CD4-positive, alpha-beta memory T cell (primary cell): ENCODE measurements at regions of chr10 and their contacts with region 1.

Region 1: GRCh38 chr10:114821293-114821914 is at the start of gene FHIP2A:
- DNase-seq: peak; percentile 71 to 91 (median 86)
- H3K4me3 ChIP-seq: peak within 1 kb of the TSS; percentile 59 to 66
- H3K4me3 Mint-ChIP-seq: peak within 1 kb of the TSS; percentile 91 to 96 (median 94)
- H3K27ac ChIP-seq: peak within 1 kb of the TSS; percentile 73
- H3K27ac Mint-ChIP-seq: peak within 1 kb of the TSS; percentile 92 to 96 (median 95)
- H3K4me1 ChIP-seq: peaks cover 42% of the 10 kb centered on the region
- H3K4me1 Mint-ChIP-seq: peaks cover 26 to 39% (median 33%) of the 10 kb centered on the region in 4 donors
- H3K27me3 ChIP-seq: no peaks in the 10 kb centered on the region
- H3K27me3 Mint-ChIP-seq: no peaks in the 10 kb centered on the region
- total RNA-seq, gene FHIP2A: 25.1 to 32.1 TPM

Region 2: DNA sequence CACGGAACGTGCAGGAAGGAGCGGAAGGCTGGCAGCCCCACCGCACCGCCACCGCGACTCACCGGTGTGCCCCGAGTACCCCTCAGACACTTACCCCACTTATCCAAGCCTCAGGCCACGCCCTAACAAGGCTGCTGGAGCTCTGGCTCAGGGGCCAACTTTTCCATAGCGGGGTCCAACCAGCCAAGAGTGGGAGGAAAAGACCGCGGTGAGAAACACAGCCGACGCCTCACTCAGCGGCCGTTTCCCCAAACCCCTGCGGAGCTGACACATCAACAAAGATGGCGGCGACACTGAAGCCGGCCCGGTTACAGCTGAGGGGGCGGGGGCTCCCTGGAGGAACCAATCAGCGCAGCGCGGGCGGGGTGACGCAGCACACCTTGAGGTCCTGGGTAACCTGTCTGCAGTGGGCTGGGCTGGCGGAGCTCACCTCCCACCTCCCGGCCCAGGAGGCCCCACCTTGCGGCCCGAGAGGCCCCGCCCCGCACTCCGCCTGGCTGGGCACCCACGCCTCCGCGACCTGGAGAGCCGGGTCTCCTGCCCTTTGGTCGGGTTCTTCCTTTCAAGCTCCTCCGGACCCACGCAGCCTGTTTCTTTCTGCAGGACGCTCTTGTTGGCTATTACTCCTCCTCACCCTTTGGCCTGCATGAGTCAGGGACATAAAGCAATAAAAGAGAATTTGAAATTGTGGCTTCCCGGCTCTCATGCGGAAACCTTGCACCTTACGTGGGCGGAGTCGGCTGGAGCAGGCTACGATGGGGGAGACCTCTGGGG is 647.3 kb before region 1 on chr10 and contains the start of gene CCDC186:
- CTCF ChIA-PET with region 1: no interaction called
- POLR2A ChIA-PET with region 1: interaction called, 5 read pairs
- intact Hi-C with region 1: loop called (anchors 10 kb)
- DNase-seq: peak; percentile 97 to 98 (median 97)
- H3K4me3 ChIP-seq: peak within 1 kb of the TSS; percentile 47 to 84
- H3K4me3 Mint-ChIP-seq: peak within 1 kb of the TSS; percentile 92 to 99 (median 98)
- H3K27ac ChIP-seq: peak within 1 kb of the TSS; percentile 85
- H3K27ac Mint-ChIP-seq: peak within 1 kb of the TSS; percentile 83 to 99 (median 99)
- H3K4me1 ChIP-seq: peaks cover 35% of the 10 kb centered on the region
- H3K4me1 Mint-ChIP-seq: peaks cover 31 to 57% (median 38%) of the 10 kb centered on the region in 4 donors
- H3K27me3 ChIP-seq: no peaks in the 10 kb centered on the region
- H3K27me3 Mint-ChIP-seq: peaks cover 0 to 1% of the 10 kb centered on the region in 2 donors
- total RNA-seq, gene CCDC186: 39.1 to 43.3 TPM

Region 3: GRCh38 chr10:114541081-114541796 is 280.2 kb before region 1 on chr10:
- CTCF ChIA-PET with region 1: interaction called, 11 read pairs
- POLR2A ChIA-PET with region 1: interaction called, 14 read pairs
- intact Hi-C with region 1: loop called (anchors 5 kb)
- DNase-seq: peak; percentile 86 to 92 (median 90)
- H3K4me3 ChIP-seq: no peak overlapping the region
- H3K4me3 Mint-ChIP-seq: peak overlapping the region; percentile 57 to 87 (median 76)
- H3K27ac ChIP-seq: peak overlapping the region; percentile 74
- H3K27ac Mint-ChIP-seq: peak overlapping the region; percentile 89 to 100 (median 98)
- H3K4me1 ChIP-seq: peaks cover 97% of the 10 kb centered on the region
- H3K4me1 Mint-ChIP-seq: peaks cover 67 to 92% (median 86%) of the 10 kb centered on the region in 4 donors
- H3K27me3 ChIP-seq: no peaks in the 10 kb centered on the region
- H3K27me3 Mint-ChIP-seq: no peaks in the 10 kb centered on the region

Region 4: GRCh38 chr10:114684085-114684821 is 137.2 kb before region 1 on chr10:
- CTCF ChIA-PET with region 1: no interaction called
- POLR2A ChIA-PET with region 1: no interaction called
- intact Hi-C with region 1: no loop called
- DNase-seq: no peak
- H3K4me3 ChIP-seq: no peak overlapping the region
- H3K4me3 Mint-ChIP-seq: no peak overlapping the region
- H3K27ac ChIP-seq: no peak overlapping the region
- H3K27ac Mint-ChIP-seq: no peak overlapping the region
- H3K4me1 ChIP-seq: no peaks in the 10 kb centered on the region
- H3K4me1 Mint-ChIP-seq: no peaks in the 10 kb centered on the region
- H3K27me3 ChIP-seq: no peaks in the 10 kb centered on the region
- H3K27me3 Mint-ChIP-seq: no peaks in the 10 kb centered on the region

Region 5: DNA sequence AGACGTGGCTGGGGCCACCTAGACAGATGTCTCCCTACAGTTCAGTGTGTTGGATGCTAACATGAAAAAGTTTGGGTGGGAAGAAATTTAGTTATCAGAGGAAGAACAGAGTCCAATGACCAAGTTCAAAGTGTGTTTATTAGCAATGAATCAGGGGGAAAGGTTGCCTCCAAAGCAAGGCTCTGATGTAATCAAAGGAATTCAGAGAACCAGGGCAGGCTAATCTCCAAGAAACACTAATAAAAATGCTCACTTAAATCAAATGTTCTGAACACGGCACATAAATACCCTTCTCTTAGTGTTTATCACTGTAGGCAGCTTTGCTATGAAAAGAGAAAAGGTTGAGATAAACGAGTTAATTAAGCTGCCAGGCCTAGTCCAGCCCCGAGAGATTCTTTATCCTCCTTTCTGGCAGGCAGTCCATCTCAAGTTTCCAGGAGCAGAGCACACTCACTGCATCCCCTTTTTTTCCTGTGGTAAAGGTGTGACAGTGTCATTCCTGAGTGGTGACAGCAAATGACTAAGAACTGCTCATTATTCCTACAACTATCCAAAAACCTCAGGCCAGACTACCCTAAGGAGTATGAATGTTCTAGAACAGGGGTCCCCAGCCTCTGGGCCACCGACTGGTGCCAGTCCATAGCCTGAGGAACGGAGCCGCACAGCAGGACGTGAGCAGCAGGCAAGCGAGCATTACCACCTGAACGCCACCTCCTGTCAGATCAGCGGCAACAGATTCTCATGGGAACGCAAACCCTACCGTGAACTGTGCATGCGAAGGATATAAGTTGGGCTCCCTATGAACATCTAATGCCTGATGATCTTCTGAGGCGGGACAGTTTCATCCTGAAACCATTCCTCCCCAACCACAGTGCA is 66.7 kb before region 1 on chr10:
- CTCF ChIA-PET with region 1: no interaction called
- POLR2A ChIA-PET with region 1: no interaction called
- intact Hi-C with region 1: no loop called
- DNase-seq: no peak
- H3K4me3 ChIP-seq: no peak overlapping the region
- H3K4me3 Mint-ChIP-seq: no peak overlapping the region
- H3K27ac ChIP-seq: no peak overlapping the region
- H3K27ac Mint-ChIP-seq: no peak overlapping the region
- H3K4me1 ChIP-seq: no peaks in the 10 kb centered on the region
- H3K4me1 Mint-ChIP-seq: no peaks in the 10 kb centered on the region
- H3K27me3 ChIP-seq: no peaks in the 10 kb centered on the region
- H3K27me3 Mint-ChIP-seq: peaks cover 1 to 12% of the 10 kb centered on the region in 2 donors

Region 6: DNA sequence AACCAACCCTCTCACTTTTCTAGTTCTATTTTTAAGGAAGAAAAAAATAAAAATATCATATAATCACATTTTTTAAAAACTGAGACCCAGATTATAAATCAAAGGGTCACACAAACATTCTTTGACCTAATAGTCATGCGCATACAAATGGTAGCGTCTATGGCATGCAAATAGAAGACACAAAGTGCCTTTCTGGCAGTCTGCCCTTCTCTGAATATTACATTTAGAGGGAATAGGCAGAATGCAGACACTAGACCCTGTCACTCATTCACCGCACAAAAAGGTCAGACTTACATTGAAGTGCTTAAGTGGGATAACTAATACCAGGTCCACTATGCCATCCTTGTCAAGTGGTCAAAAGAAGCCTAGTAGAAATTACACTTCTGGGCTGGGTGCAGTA is 26.4 kb before region 1 on chr10:
- CTCF ChIA-PET with region 1: interaction called, 10 read pairs
- POLR2A ChIA-PET with region 1: interaction called, 4 read pairs
- intact Hi-C with region 1: loop called (anchors 2 kb)
- DNase-seq: no peak
- H3K4me3 ChIP-seq: no peak overlapping the region
- H3K4me3 Mint-ChIP-seq: no peak overlapping the region
- H3K27ac ChIP-seq: no peak overlapping the region
- H3K27ac Mint-ChIP-seq: no peak overlapping the region
- H3K4me1 ChIP-seq: peaks cover 14% of the 10 kb centered on the region
- H3K4me1 Mint-ChIP-seq: peaks cover 4 to 7% (median 6%) of the 10 kb centered on the region in 4 donors
- H3K27me3 ChIP-seq: no peaks in the 10 kb centered on the region
- H3K27me3 Mint-ChIP-seq: no peaks in the 10 kb centered on the region

Region 7: DNA sequence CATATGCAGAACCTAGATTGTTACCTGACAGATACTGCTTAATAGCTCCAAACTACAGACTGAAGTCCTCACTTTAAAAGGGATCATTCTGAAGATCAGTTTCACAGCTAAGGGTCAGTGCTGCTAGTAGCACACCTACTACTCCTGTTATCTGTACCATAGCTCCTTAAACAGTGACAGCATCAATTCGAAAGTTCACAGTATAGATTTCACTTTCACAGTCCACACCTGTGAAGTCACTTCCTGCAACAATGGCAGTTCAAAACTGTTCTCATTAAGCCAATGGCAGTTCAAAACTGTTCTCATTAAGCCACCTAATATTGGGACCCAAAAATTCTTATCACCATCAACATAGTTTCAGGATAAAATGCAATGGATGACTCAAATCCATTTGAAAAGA is 10.5 kb before region 1 on chr10:
- CTCF ChIA-PET with region 1: interaction called, 29 read pairs
- POLR2A ChIA-PET with region 1: interaction called, 26 read pairs
- intact Hi-C with region 1: no loop called
- DNase-seq: no peak
- H3K4me3 ChIP-seq: no peak overlapping the region
- H3K4me3 Mint-ChIP-seq: peak overlapping the region in 5 of 8 donors; percentile 1 to 68 (median 38)
- H3K27ac ChIP-seq: no peak overlapping the region
- H3K27ac Mint-ChIP-seq: peak overlapping the region; percentile 4 to 91 (median 79)
- H3K4me1 ChIP-seq: peaks cover 42% of the 10 kb centered on the region
- H3K4me1 Mint-ChIP-seq: peaks cover 27 to 35% (median 30%) of the 10 kb centered on the region in 4 donors
- H3K27me3 ChIP-seq: no peaks in the 10 kb centered on the region
- H3K27me3 Mint-ChIP-seq: no peaks in the 10 kb centered on the region

Region 8: GRCh38 chr10:114845978-114846693 is 24.7 kb after region 1 on chr10:
- CTCF ChIA-PET with region 1: interaction called, 10 read pairs
- POLR2A ChIA-PET with region 1: no interaction called
- intact Hi-C with region 1: no loop called
- DNase-seq: no peak
- H3K4me3 ChIP-seq: no peak overlapping the region
- H3K4me3 Mint-ChIP-seq: no peak overlapping the region
- H3K27ac ChIP-seq: no peak overlapping the region
- H3K27ac Mint-ChIP-seq: peak overlapping the region in 1 of 7 donors; percentile 22
- H3K4me1 ChIP-seq: no peaks in the 10 kb centered on the region
- H3K4me1 Mint-ChIP-seq: peaks cover 0 to 3% (median 0%) of the 10 kb centered on the region in 4 donors
- H3K27me3 ChIP-seq: no peaks in the 10 kb centered on the region
- H3K27me3 Mint-ChIP-seq: no peaks in the 10 kb centered on the region

Region 9: GRCh38 chr10:114930320-114930719 is 108.9 kb after region 1 on chr10:
- CTCF ChIA-PET with region 1: no interaction called
- POLR2A ChIA-PET with region 1: no interaction called
- intact Hi-C with region 1: no loop called
- DNase-seq: no peak
- H3K4me3 ChIP-seq: no peak overlapping the region
- H3K4me3 Mint-ChIP-seq: no peak overlapping the region
- H3K27ac ChIP-seq: no peak overlapping the region
- H3K27ac Mint-ChIP-seq: no peak overlapping the region
- H3K4me1 ChIP-seq: no peaks in the 10 kb centered on the region
- H3K4me1 Mint-ChIP-seq: peaks cover 0 to 3% (median 0%) of the 10 kb centered on the region in 4 donors
- H3K27me3 ChIP-seq: peaks cover 4% of the 10 kb centered on the region
- H3K27me3 Mint-ChIP-seq: peaks cover 10 to 19% of the 10 kb centered on the region in 2 donors